Right ventricle myocardium inferior (tissue), 1 donor: ENCODE measurements at regions of chr10 and their contacts with region 1.

Region 1: DNA sequence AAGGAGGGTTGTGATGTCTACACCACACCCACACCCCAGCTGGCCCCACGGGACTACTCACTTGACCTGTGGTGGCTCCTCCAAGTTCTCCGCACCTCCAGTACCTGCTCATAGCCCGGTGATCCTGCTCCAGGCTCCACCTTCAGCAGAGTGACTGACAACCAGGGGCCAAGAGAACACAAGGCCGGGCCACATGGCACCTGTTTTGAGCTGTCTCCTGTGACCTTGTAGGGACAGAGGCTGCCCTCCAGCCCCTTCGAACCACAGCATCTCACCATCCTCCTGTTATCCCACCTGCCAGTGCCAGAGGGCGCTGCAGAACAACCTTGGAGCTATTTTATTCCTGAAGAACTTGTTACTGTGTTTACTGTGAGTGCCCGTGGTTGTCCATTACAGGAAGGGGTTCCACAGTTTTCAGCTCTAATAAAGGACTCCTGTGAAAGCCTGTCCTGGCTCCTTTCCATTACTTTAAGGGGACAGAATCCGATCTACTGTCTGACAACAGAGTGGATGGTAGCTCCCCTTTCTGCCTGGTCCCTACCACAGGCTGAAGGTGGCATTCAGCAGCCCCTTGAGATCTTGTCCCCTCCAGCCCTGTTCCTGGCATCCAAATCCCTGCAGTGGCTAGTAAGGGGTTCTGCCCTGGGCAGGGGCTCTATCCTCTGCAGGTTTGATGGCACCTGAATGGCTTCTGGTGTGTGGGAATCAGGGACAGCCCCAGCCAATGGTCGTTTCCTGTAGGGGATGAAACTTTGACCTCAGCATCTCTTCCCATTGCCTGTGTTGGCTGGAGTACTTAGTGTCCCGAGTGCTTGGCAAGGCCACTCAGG is 50.8 kb downstream of the C10orf120 start:
- DNase-seq: no peak
- ATAC-seq: peak; percentile 71

Region 2: DNA sequence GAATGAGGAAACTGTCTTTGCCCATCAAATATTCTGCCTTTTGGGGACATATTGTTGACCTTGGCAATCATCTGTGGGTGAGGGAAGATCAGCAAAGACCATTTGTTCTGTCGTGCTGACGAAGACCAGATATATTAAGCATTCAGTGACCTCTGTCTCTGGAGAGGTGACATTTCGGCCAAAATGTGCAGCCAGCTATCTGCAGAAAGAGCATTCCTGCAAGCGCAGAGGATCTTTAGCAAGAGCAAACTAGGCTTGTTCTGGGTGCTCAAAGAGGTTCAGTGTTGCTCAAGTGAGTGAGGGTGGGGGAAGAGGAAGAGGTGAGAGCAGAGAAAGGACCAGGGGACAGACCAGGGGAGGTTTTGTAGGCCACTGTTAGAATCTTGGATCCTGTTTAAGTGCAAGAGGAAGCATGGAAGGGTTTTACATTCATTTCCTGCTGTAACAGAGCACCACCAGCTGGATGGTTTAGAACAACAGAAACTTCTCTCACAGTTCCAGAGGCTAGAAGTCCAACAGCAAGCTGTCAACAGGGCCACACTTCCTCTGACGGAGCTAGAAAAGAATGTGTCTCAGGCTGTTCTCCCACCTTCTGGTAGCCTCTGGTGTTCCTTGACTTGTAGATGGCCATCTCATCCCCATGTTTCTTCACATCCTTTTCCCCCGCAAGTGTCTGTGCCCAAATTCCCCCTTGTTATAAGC is 39.6 kb after region 1 on chr10:
- intact Hi-C with region 1: loop called (anchors 5 kb)
- DNase-seq: no peak
- ATAC-seq: peak; percentile 87

Region 3: GRCh38 chr10:122703439-122704118 is 54.8 kb after region 1 on chr10:
- intact Hi-C with region 1: loop called (anchors 1 kb)
- DNase-seq: peak; percentile 74
- ATAC-seq: peak; percentile 92